ENCODE measurements at regions of chr11 and their contacts with region 1.

Region 1: DNA sequence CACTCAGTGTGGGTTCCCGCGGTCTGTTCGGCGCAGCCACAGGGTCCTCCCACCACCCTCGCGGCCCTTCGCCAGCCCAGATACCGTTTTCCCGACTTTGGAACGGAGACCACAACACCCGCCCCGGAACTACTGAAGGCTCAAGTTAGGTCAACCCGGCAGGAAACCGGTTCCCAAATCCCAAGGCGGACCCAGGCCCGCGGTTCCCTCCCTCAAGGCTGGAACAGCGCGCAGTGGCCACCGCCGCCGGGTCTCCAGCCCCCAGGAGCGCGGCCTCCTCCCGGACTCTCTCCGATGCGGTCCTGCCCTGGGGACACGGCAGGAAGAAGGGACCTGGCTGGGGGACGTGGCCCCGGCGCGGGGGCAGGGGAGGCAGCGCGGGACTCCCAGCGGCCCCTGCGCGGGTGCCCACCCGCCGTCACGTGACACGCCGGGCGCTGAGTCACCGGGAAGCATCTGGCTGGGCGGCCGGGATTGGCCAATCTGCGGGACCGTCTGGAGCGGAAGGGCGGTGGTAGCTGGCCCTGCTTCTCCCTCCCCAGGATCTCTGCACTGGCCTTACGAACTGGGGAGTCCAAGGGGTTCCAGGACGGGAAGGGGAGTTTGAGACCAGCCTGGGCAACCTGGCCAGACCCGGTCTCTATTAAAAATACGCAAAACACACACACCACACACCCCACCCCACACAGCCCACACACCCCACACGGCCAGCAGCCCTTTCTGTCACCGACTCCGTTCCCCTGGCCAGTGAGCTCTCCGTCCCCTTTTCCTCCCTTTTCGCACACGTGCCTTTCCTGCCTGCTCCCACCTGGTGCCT is 21.5 kb upstream of the MALAT1 start:
- DNase-seq: peak; percentile 97
- H3K4me3 ChIP-seq: peak overlapping the region; percentile 76 to 81
- H3K27ac ChIP-seq: peak overlapping the region; percentile 99 to 100
- H3K4me1 ChIP-seq: peaks cover 24% of the 10 kb centered on the region
- H3K27me3 ChIP-seq: no peaks in the 10 kb centered on the region
- CTCF ChIP-seq: no peak
- POLR2A ChIP-seq: peak; percentile 89

Region 2: GRCh38 chr11:65491614-65492386 is 14.4 kb after region 1 on chr11:
- intact Hi-C with region 1: loop called (anchors 2 kb)
- DNase-seq: peak; percentile 94
- H3K4me3 ChIP-seq: no peak overlapping the region
- H3K27ac ChIP-seq: peak overlapping the region; percentile 98 to 100
- H3K4me1 ChIP-seq: peaks cover 62% of the 10 kb centered on the region
- H3K27me3 ChIP-seq: no peaks in the 10 kb centered on the region
- CTCF ChIP-seq: peak in 1 of 4 experiments; percentile 14
- POLR2A ChIP-seq: peak; percentile 74

Measured in prostate gland (tissue), 2 donors.